Thyroid gland (tissue), 4 donors: ENCODE measurements at regions of chr3 and their contacts with region 1.

Region 1: DNA sequence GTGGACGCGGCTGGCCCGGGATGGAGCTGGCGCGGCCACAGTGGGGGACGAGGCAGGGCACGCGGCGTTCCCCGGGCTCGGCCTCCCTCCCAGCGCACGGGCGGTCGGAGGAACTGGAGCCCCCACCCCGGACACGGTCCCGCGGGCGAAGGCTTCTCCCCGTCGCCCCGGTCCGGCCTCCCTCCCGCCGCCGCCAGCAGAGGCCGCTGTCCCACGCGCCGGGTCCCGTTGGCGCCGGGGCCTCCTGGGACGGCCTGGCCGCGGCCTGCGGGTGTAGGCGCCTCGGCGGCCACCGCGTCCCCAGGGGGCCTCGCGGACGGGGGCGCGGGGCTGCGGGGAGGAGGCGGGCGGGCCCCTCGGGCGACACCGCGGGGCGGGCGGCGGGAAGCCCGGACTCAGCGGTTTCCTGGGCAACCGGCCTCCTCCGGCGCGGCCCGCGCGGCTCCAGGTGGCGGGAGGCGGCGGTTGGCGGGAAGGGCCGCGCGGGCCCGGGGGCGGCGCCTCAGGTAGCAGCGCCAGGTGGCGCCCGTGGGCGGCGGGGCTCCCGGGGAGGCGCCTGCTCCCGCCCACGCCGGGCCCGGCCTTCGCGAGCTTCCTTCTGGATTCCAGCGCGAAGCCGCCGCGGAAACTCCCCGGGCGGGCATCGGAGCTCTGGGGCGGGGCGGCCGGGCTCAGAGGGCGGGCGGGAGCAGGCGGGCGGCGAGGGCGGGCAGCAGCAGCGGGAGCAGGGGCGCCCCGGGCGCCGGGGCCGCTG is 26.7 kb downstream of the MELTF start:
- DNase-seq: peak; percentile 90 to 91
- H3K4me3 ChIP-seq: peak overlapping the region in 2 of 3 donors; percentile 64 to 65
- H3K27ac ChIP-seq: peak overlapping the region; percentile 79 to 84 (median 83)
- H3K4me1 ChIP-seq: peaks cover 9 to 12% of the 10 kb centered on the region in 2 donors
- H3K27me3 ChIP-seq: no peaks in the 10 kb centered on the region
- CTCF ChIP-seq: peak in 5 of 6 experiments; percentile 40 to 93 (median 78)
- POLR2A ChIP-seq: peak in 1 of 2 donors; percentile 33

Region 2: DNA sequence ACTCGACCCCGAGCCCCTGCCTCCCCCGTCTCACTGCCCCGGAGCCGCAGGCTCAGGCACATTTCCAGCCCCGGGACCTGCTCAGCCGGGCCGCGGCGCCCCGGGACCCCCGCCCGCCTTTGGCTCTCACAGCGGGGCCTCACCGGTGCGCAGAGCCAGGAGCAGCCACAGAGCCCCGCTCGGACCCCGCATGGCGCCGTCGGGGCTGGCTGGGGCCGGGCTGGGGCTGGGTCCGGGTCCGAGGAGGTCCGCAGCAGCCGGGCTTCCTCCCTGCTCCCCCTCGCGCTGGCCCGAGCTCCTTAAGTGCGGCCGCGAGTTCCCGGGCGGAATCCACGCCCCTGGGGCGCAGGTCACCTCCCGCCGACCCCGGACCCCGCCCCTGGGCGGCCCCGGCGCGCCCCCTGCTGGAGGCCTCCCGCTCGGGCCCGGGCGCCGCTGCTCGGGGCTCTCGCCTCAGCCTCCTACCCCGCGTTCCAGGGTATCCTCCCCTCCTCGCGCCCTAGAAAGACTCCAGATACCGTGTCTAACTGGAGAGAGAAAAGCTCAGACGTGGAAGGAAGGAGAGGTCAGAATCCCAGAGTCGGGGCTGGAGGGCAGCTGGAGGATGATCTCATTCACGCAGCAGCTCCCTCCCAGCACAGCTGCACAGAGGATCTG is 26.8 kb after region 1 on chr3 and contains the start of gene MELTF:
- intact Hi-C with region 1: loop called (anchors 2 kb)
- DNase-seq: peak; percentile 58 to 60
- H3K4me3 ChIP-seq: peak within 1 kb of the TSS in 2 of 3 donors; percentile 39 to 71
- H3K27ac ChIP-seq: peak within 1 kb of the TSS in 1 of 3 donors; percentile 44
- H3K4me1 ChIP-seq: peaks cover 9 to 26% of the 10 kb centered on the region in 2 donors
- H3K27me3 ChIP-seq: no peaks in the 10 kb centered on the region
- CTCF ChIP-seq: peak in 5 of 6 experiments; percentile 31 to 92 (median 71)
- POLR2A ChIP-seq: no peak
- total RNA-seq, gene MELTF: 2.7 to 13.8 (median 4.3) TPM

Region 3: GRCh38 chr3:197186887-197187588 is 184.2 kb after region 1 on chr3:
- intact Hi-C with region 1: loop called (anchors 10 kb)
- DNase-seq: peak; percentile 5 to 16
- H3K4me3 ChIP-seq: no peak overlapping the region
- H3K27ac ChIP-seq: no peak overlapping the region
- H3K4me1 ChIP-seq: no peaks in the 10 kb centered on the region
- H3K27me3 ChIP-seq: no peaks in the 10 kb centered on the region
- CTCF ChIP-seq: peak; percentile 32 to 77 (median 62)
- POLR2A ChIP-seq: no peak

Region 4: DNA sequence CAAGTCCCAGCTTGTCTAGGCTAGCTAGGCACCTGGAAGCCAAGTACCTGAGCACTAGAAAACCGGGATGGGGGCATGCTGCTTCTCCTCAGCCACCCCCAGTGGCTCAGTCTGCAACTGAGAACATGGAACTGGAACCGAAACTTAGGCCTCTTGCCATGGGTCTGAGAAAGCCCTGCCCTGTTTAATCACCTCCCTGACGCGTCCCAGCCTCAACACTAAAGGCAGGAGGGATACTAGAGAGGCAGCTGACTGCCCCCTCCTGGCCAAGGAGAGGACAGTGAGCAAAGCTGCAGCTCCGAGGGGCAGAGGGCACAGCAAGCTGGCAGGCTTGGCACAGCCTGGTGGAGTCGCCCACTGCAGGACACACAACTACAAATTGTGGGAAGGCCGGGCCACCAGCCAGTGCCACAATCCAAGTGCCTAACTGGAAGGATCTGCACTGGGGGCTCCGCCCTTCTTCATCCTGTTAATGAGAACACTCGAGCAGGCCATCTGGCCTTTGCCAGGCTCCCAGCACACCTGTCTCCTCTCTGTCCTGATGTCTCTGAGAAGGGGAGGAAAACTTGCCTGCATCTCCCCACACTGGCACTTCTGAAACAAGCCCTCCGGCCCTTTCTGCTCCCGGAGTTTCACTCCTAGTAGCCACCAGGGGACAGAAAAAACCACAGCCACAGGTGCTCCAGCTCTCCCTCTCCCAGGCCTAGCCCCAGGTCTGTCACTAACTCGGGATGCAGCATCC is 499.2 kb after region 1 on chr3:
- intact Hi-C with region 1: loop called (anchors 10 kb)
- DNase-seq: peak; percentile 34 to 57
- H3K4me3 ChIP-seq: no peak overlapping the region
- H3K27ac ChIP-seq: no peak overlapping the region
- H3K4me1 ChIP-seq: no peaks in the 10 kb centered on the region
- H3K27me3 ChIP-seq: no peaks in the 10 kb centered on the region
- CTCF ChIP-seq: peak in 4 of 6 experiments; percentile 34 to 50 (median 42)
- POLR2A ChIP-seq: no peak